ENCODE measurements at regions of chr19 and their contacts with region 1.

Region 1: DNA sequence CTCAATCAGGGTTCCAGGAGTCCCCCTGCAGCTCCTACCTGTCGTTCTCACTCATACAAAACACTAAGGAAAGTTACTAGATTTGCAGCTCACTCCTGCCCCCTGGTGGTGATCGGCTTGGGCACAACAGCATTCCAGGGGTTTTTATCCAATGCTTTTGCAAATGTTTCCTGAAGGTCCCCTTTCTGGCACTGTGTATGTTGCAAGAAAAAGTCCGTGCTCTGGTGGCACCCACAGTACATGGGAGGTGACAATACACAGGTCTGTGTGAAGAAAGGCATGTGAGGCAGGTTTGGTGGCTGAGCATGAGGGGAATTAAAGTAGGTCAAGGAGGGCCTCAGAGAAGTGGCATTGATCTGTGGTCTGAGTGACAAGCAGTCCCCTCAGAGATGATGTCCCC is 8.6 kb upstream of the TYK2 start:
- DNase-seq: peak; percentile 87
- ATAC-seq: peak; percentile 55
- H3K4me3 ChIP-seq: no peak overlapping the region
- H3K4me3 Mint-ChIP-seq: no peak overlapping the region
- H3K27ac ChIP-seq: no peak overlapping the region
- H3K27ac Mint-ChIP-seq: no peak overlapping the region
- H3K4me1 ChIP-seq: peaks cover 0 to 8% of the 10 kb centered on the region in 2 donors
- H3K4me1 Mint-ChIP-seq: peaks cover 10% of the 10 kb centered on the region
- H3K27me3 ChIP-seq: no peaks in the 10 kb centered on the region
- H3K27me3 Mint-ChIP-seq: no peaks in the 10 kb centered on the region
- CTCF ChIP-seq: peak; percentile 96

Region 2: GRCh38 chr19:9934132-9934950 is 454.6 kb before region 1 on chr19:
- CTCF ChIA-PET with region 1: interaction called, 41 read pairs
- POLR2A ChIA-PET with region 1: no interaction called
- intact Hi-C with region 1: no loop called
- DNase-seq: peak; percentile 84
- ATAC-seq: peak; percentile 82
- H3K4me3 ChIP-seq: no peak overlapping the region
- H3K4me3 Mint-ChIP-seq: no peak overlapping the region
- H3K27ac ChIP-seq: no peak overlapping the region
- H3K27ac Mint-ChIP-seq: no peak overlapping the region
- H3K4me1 ChIP-seq: peaks cover 22 to 30% of the 10 kb centered on the region in 2 donors
- H3K4me1 Mint-ChIP-seq: peaks cover 26% of the 10 kb centered on the region
- H3K27me3 ChIP-seq: peaks cover 0 to 60% (median 34%) of the 10 kb centered on the region in 4 experiments
- H3K27me3 Mint-ChIP-seq: peaks cover 51% of the 10 kb centered on the region
- CTCF ChIP-seq: peak; percentile 89

Region 3: GRCh38 chr19:10279737-10280442 is 109.1 kb before region 1 on chr19:
- CTCF ChIA-PET with region 1: interaction called, 11 read pairs
- POLR2A ChIA-PET with region 1: interaction called, 5 read pairs
- intact Hi-C with region 1: no loop called
- DNase-seq: peak; percentile 24
- ATAC-seq: no peak
- H3K4me3 ChIP-seq: no peak overlapping the region
- H3K4me3 Mint-ChIP-seq: no peak overlapping the region
- H3K27ac ChIP-seq: no peak overlapping the region
- H3K27ac Mint-ChIP-seq: peak overlapping the region; percentile 73
- H3K4me1 ChIP-seq: peaks cover 4 to 5% of the 10 kb centered on the region in 2 donors
- H3K4me1 Mint-ChIP-seq: peaks cover 9% of the 10 kb centered on the region
- H3K27me3 ChIP-seq: no peaks in the 10 kb centered on the region
- H3K27me3 Mint-ChIP-seq: no peaks in the 10 kb centered on the region
- CTCF ChIP-seq: no peak

Region 4: DNA sequence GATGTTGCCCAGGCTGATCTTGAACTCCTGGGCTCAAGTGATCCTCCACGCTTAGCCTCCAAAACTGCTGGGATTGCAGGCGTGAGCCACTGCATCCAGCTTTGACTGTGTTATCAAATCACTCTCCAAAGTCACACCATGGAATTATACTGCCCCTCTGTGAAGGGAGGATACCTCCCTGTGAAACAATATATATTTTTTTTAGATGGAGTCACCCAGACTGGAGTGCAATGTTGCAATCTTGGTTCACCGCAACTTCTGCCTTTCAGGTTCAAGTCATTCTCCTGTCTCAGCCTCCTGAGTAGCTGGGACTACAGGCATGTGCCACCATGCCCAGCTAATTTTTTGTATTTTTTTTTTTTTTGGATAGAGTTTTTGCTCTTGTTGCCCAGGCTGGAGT is 16.3 kb before region 1 on chr19:
- CTCF ChIA-PET with region 1: interaction called, 18 read pairs
- POLR2A ChIA-PET with region 1: no interaction called
- intact Hi-C with region 1: no loop called
- DNase-seq: no peak
- ATAC-seq: no peak
- H3K4me3 ChIP-seq: no peak overlapping the region
- H3K4me3 Mint-ChIP-seq: no peak overlapping the region
- H3K27ac ChIP-seq: no peak overlapping the region
- H3K27ac Mint-ChIP-seq: no peak overlapping the region
- H3K4me1 ChIP-seq: peaks cover 7 to 10% of the 10 kb centered on the region in 2 donors
- H3K4me1 Mint-ChIP-seq: peaks cover 13% of the 10 kb centered on the region
- H3K27me3 ChIP-seq: no peaks in the 10 kb centered on the region
- H3K27me3 Mint-ChIP-seq: no peaks in the 10 kb centered on the region
- CTCF ChIP-seq: no peak

Region 5: DNA sequence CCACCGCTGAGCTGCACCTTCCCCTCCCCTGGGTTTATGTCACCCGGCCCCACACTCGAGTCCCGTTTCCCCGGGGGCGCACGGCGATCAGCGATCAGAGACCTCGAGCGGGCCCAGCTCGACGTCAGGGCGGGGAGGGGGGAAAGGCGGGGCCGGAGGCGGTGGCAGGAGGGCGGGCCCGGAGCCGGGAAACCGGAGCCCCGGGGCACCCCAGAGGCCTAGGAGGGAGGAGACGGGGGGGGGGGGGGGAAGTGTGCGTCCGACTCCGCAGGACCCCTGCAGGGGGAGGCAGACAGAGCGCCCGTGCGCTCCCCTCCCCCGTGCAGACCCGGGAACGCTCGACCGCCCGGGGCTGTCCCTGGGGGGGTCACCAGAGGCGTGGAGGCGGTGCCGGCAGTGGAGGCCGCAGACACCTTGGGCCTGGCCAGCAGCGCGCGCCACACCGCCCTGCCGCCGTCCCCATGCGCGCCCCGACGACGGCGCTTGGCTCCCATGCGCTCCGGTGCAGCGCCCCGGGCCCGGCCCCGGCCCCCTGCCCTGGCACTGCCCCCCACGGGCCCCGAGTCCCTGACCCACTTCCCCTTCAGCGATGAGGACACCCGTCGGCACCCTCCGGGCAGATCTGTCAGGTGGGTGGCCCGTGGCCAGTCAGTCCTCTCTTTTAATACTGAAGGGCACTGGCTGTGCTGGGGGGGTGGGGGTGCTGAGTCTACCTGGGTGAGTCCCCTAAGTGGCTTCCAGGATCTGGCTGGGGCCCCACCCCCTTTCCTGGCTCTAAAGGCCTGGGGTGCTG is 43.2 kb after region 1 on chr19:
- CTCF ChIA-PET with region 1: interaction called, 9 read pairs
- POLR2A ChIA-PET with region 1: no interaction called
- intact Hi-C with region 1: loop called (anchors 1 kb)
- DNase-seq: peak; percentile 88
- ATAC-seq: peak; percentile 53
- H3K4me3 ChIP-seq: peak overlapping the region in 4 of 5 experiments; percentile 29 to 60 (median 43)
- H3K4me3 Mint-ChIP-seq: peak overlapping the region; percentile 94
- H3K27ac ChIP-seq: no peak overlapping the region
- H3K27ac Mint-ChIP-seq: peak overlapping the region; percentile 91
- H3K4me1 ChIP-seq: peaks cover 49 to 55% of the 10 kb centered on the region in 2 donors
- H3K4me1 Mint-ChIP-seq: peaks cover 60% of the 10 kb centered on the region
- H3K27me3 ChIP-seq: peaks cover 0 to 25% (median 12%) of the 10 kb centered on the region in 4 experiments
- H3K27me3 Mint-ChIP-seq: peaks cover 13% of the 10 kb centered on the region
- CTCF ChIP-seq: no peak

Region 6: GRCh38 chr19:10565567-10566407 is 176.8 kb after region 1 on chr19 and contains the start of gene KRI1:
- CTCF ChIA-PET with region 1: no interaction called
- POLR2A ChIA-PET with region 1: no interaction called
- intact Hi-C with region 1: no loop called
- DNase-seq: peak; percentile 100
- ATAC-seq: peak; percentile 63
- H3K4me3 ChIP-seq: peak within 1 kb of the TSS; percentile 92 to 99 (median 97)
- H3K4me3 Mint-ChIP-seq: peak within 1 kb of the TSS; percentile 95
- H3K27ac ChIP-seq: peak within 1 kb of the TSS; percentile 87 to 88
- H3K27ac Mint-ChIP-seq: peak within 1 kb of the TSS; percentile 96
- H3K4me1 ChIP-seq: peaks cover 28 to 41% of the 10 kb centered on the region in 2 donors
- H3K4me1 Mint-ChIP-seq: peaks cover 44% of the 10 kb centered on the region
- H3K27me3 ChIP-seq: no peaks in the 10 kb centered on the region
- H3K27me3 Mint-ChIP-seq: no peaks in the 10 kb centered on the region
- CTCF ChIP-seq: peak; percentile 51
- total RNA-seq, gene KRI1: 62.8 and 67.9 TPM in 2 replicates

Region 7: DNA sequence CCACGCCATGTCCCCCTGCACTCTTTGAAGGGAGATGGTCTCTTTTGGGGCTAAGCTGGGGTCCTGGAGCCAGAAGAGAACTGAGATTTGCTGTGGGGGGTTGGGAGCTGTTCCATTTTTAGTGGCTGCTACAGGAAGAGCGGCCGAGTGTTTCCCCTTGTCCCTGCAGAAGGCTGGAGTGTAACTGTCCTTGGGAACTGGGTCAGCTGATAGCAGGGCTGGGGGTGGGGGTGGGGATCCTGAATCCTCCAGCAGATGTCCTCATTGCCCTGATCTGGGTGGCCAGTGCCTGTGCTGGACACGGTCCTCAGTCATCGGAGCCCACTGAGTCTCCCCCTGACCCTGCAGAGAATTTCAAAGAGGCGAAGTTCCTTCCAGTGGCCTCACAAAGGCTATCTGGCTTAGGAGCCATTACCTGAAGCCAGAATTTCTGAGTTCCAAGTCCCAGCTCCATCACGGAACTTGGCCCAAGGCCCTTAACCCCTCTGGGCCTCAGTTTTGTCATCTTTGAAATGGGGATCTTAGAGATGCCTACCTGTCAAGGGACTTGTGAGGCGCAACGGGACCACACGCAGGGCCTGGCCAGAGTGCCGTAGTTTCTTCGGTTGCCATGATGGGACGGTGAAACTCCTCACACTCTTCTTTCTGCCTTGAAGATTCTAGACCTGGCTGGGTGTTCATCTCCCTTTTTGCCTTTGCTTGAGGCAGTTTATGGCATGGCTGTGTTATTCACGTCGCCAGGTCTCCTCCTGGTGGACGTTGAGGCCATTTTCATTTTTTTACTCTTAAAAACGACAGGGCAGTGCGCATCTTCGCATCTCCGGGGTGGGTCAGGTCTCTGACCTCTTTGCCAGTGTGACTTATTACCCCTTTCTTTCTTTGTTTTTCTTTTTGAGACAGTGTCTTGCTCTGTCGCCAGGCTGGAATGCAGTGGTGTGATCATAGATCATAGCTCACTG is 380.9 kb after region 1 on chr19:
- CTCF ChIA-PET with region 1: no interaction called
- POLR2A ChIA-PET with region 1: no interaction called
- intact Hi-C with region 1: no loop called
- DNase-seq: peak; percentile 43
- ATAC-seq: no peak
- H3K4me3 ChIP-seq: no peak overlapping the region
- H3K4me3 Mint-ChIP-seq: no peak overlapping the region
- H3K27ac ChIP-seq: peak overlapping the region in 1 of 2 donors; percentile 66
- H3K27ac Mint-ChIP-seq: peak overlapping the region; percentile 88
- H3K4me1 ChIP-seq: peaks cover 14 to 36% of the 10 kb centered on the region in 2 donors
- H3K4me1 Mint-ChIP-seq: peaks cover 46% of the 10 kb centered on the region
- H3K27me3 ChIP-seq: no peaks in the 10 kb centered on the region
- H3K27me3 Mint-ChIP-seq: no peaks in the 10 kb centered on the region
- CTCF ChIP-seq: peak; percentile 14

Region 8: GRCh38 chr19:11179716-11180297 is 790.9 kb after region 1 on chr19:
- CTCF ChIA-PET with region 1: no interaction called
- POLR2A ChIA-PET with region 1: no interaction called
- intact Hi-C with region 1: no loop called
- DNase-seq: peak; percentile 75
- ATAC-seq: peak; percentile 95
- H3K4me3 ChIP-seq: peak overlapping the region in 2 of 5 experiments; percentile 0 to 15
- H3K4me3 Mint-ChIP-seq: peak overlapping the region; percentile 75
- H3K27ac ChIP-seq: no peak overlapping the region
- H3K27ac Mint-ChIP-seq: peak overlapping the region; percentile 29
- H3K4me1 ChIP-seq: peaks cover 12 to 15% of the 10 kb centered on the region in 2 donors
- H3K4me1 Mint-ChIP-seq: peaks cover 17% of the 10 kb centered on the region
- H3K27me3 ChIP-seq: peaks cover 0 to 20% (median 7%) of the 10 kb centered on the region in 4 experiments
- H3K27me3 Mint-ChIP-seq: peaks cover 23% of the 10 kb centered on the region
- CTCF ChIP-seq: no peak